Left cardiac atrium (tissue), 4 donors: ENCODE measurements at regions of chr11 and their contacts with region 1.

Region 1: DNA sequence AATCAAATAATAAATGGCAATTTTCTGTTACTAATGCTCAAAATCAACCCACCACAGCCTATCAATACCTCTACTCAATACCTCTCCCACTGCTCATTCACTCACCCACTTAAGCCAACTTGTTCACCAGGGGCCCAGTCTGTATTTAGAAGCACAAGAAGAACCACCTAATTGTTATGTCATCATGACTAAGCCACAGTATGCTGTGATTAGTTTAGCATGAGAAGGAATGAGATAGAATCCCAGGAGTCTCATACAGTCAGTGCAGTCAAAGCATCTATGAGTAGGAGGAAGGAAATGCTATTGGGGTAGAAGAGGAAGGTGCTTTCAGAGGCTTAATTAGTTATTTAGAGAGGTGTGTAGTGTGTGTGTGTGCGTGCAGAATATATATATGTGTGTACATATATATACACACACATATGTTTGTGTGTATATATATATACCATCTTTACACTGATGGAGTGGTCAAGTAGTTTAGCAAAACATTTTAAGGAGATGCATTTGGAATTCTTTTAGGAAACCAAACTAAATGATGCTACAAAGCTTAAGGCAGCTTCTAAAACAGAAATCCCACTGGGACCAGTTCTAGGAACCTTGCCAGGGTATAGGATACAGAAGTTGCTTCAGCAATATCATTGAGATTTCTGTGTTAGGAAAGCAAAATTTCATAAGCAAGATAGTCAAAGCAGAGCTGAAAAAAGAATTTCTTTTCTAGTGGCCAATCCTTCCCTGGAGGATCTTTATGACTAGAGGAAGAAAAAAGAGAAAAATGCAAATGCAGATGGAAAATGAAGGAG is 27.5 kb downstream of the KCNA4 start:
- DNase-seq: no peak
- ATAC-seq: peak in 1 of 2 donors; percentile 58

Region 2: DNA sequence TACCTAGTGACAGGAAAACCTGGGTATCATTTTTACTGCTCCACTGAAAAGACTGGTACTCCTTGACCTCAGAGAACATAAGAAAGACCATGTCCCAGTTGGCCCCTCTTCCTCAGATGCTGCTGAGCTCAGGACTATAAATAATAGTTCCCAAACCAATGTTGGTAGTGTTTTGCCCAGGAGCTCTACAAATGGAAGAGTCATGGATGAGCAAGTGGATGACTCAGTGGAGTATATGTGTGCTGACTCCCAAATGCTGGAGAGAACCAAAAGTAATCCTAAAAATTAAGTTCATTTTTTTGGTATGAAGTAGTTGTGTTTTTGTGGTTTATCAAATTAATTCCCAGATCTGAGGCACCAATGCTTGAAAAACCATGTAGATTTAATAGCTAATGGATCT is 454.5 kb before region 1 on chr11:
- intact Hi-C with region 1: loop called in 1 of 2 experiments (anchors 10 kb)
- DNase-seq: no peak
- ATAC-seq: peak in 1 of 2 donors; percentile 41

Region 3: DNA sequence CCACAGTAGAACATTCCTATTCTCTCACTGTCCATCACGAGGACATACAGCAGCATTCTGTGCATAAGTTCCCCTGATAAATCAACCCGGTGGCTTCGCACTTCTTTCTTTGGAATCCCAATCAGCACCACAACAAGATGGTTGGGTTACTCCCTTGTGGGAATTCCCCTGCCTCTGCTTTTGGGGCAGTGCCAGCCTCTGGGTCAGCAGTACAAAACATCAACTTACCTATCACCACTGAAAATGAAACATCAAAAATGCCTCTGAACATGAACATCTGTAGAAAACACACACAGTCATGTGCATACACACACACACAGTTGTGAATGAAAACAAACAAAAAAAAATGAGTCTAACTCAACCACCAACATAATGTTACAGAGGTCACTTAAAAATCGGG is 51.8 kb before region 1 on chr11:
- intact Hi-C with region 1: loop called in 1 of 2 experiments (anchors 1 kb)
- DNase-seq: no peak
- ATAC-seq: no peak

Region 4: DNA sequence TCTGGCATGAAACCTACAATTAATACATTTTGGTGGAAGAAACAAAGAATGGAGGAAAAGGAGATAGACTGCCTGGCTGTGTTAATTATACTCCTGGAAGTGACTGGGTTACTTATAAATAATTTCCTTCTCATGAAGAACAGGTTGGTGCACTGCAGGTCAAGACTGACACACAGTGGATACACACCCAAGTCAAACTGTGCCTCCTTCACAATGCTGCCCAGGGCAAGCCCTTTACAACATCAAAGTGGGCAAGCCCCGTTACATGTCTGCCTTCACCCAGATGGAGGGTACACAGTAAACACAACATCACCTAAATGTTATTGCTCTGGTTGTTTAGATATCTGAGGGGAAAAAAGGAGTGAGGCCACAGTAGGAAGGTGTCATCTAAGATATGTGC is 111.1 kb after region 1 on chr11:
- intact Hi-C with region 1: no loop called
- DNase-seq: no peak
- ATAC-seq: no peak

Region 5: GRCh38 chr11:30333405-30333804 is 344.0 kb after region 1 on chr11:
- intact Hi-C with region 1: no loop called
- DNase-seq: no peak
- ATAC-seq: peak in 1 of 2 donors; percentile 30